GM10248 (cell line): ENCODE measurements at regions of chr10 and their contacts with region 1.

Region 1: DNA sequence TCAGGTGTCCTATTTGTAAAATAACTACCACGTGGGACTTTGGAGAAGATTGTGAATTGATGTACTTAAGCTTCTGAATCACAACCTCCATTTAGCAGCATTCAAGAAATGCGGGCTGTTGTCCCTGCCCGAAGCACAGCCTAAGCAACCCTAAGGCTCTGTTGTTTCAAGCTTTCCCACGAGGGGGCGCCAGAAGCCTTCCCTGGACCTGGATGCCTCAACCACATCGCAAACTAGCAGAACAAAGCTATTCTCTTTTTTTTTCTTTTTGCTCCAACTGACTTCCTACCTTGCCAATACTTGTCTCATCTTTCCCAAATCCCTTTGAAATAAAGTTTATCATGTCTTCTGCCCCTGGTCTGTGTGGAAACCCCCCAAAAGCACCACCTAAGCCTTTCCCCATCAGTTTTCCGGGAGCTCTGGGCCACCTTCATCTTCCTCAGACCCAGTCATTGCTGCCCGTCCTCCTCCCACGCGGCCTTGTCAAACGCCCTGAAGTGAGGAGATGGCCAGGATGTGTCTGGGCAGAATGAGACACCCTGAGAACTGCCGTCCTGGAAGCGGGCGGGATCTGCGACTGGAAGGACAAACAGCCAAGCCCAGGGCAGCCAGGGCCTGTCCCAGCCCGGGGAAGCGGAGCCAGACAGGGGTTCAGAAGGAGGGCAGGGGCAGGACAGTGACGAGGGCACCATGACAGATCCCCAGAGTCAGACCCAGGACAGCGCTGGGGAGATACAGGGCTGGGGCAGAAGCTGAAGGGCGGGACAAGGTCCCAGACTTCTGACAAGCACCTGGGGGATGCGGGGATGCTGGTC is 112.7 kb downstream of the SLIT1 start:
- DNase-seq: peak; percentile 84
- CTCF ChIP-seq: peak; percentile 96

Region 2: GRCh38 chr10:97002670-97003069 is 70.4 kb before region 1 on chr10:
- CTCF ChIA-PET with region 1: no interaction called
- POLR2A ChIA-PET with region 1: no interaction called
- DNase-seq: no peak
- CTCF ChIP-seq: no peak

Region 3: GRCh38 chr10:97096261-97097083 is 23.4 kb after region 1 on chr10:
- CTCF ChIA-PET with region 1: interaction called, 33 read pairs
- POLR2A ChIA-PET with region 1: no interaction called
- DNase-seq: peak; percentile 47
- CTCF ChIP-seq: no peak

Region 4: DNA sequence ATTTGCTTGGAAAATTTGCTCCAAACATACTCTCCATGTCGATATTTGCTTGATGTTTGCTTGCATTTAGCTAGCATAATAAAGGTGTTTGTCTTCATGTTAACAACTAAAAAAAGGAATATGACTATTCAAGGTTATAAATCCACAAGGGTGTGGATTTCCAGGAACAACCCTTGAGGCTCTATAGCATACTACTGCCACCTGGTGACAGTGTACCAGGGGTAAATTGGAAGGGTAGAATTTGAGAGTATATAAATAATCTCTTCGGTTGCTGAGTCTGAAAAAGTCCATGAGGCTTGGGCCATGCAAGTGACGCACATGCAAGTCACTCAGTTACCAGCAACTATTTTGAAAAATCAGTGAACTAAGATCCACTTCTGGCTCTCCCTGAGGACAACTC is 44.3 kb after region 1 on chr10:
- CTCF ChIA-PET with region 1: interaction called, 33 read pairs
- POLR2A ChIA-PET with region 1: no interaction called
- DNase-seq: no peak
- CTCF ChIP-seq: no peak

Region 5: GRCh38 chr10:97185326-97186058 is 112.4 kb after region 1 on chr10 and contains the start of gene SLIT1:
- CTCF ChIA-PET with region 1: interaction called, 11 read pairs
- POLR2A ChIA-PET with region 1: no interaction called
- DNase-seq: no peak
- CTCF ChIP-seq: no peak

Region 6: DNA sequence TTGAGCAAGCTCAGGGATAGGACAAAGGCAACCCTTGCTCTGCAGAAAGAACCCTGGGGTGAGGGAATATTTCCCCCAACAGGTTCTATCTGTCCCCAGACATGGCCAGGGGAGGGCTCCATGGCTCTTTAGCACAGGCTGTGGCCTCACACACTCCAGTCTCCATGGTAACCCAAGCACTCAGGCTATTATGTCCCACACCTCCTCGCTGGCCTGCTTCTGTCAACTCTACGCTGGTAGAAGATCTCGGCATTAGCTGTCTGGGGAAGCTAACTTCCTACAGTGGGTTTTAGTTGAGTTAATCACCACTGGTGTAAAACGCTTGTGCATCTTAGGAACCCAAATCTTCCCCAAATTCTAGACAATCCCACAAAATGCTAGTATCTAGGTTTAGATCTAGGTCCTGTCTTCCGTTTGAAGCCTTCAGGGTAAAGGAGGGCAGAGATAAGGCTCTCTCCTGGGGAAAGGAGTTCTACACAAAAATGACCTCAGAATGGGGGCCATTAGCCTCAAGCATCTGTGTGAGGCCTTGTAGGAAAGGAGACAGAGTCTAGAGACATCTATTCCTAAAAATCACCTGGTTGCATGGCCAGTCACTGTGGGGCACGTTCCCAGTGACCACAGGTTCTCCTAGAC is 149.4 kb after region 1 on chr10:
- CTCF ChIA-PET with region 1: interaction called, 46 read pairs
- POLR2A ChIA-PET with region 1: no interaction called
- DNase-seq: no peak
- CTCF ChIP-seq: no peak

Region 7: GRCh38 chr10:97270523-97271154 is 197.6 kb after region 1 on chr10:
- CTCF ChIA-PET with region 1: no interaction called
- POLR2A ChIA-PET with region 1: no interaction called
- DNase-seq: no peak
- CTCF ChIP-seq: no peak